Posterior cingulate gyrus (tissue), 11 donors: ENCODE measurements at regions of chr3 and their contacts with region 1.

Region 1: DNA sequence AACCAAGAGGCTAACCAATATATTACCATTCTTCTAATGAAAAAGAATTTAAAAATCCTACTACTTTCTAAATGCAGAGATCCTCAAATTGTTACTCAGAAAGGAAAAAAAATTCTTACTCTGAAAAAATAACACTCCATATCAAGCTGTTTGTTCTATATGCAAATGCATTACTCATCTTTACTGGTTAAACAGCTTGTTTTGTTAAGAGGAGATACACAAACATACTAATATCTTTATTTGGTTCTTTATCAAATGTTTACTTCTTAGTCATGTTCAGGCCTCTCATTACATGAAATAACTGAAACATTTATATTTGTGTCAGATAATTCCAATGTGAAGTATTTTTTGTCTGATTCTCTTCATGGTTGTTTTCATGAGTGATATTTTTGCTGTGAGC is 146.8 kb downstream of the PCCB start:
- DNase-seq: no peak

Region 2: DNA sequence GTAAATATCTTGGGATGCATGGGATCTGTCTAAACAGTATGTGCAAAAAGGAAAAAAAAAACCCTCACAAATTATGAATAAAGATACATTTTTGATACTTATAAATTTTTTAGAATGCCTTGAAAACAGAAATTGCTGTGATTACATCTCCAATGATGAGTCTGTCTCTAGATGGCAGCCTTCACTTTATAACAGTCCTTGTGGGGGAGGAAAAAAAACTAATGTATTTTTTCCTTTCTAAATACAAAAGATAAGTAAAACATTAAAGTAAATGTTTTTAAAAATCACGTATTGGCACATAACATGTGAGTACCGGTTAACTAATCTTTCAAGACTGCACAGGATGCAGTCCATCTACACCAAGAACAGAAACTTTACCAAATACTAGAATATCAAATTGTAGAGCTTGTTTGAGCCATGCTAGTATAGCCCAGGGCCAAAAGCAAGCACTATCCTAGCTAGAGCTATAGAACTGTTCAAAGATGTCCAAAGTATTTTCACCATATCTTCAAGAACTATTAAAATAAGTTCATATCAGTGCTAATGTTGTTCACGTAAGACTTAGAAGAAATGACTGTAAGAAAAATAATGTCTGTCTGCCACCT is 148.8 kb after region 1 on chr3:
- intact Hi-C with region 1: loop called (anchors 10 kb)
- DNase-seq: no peak